ENCODE measurements at regions of chrX and their contacts with region 1.

Region 1: DNA sequence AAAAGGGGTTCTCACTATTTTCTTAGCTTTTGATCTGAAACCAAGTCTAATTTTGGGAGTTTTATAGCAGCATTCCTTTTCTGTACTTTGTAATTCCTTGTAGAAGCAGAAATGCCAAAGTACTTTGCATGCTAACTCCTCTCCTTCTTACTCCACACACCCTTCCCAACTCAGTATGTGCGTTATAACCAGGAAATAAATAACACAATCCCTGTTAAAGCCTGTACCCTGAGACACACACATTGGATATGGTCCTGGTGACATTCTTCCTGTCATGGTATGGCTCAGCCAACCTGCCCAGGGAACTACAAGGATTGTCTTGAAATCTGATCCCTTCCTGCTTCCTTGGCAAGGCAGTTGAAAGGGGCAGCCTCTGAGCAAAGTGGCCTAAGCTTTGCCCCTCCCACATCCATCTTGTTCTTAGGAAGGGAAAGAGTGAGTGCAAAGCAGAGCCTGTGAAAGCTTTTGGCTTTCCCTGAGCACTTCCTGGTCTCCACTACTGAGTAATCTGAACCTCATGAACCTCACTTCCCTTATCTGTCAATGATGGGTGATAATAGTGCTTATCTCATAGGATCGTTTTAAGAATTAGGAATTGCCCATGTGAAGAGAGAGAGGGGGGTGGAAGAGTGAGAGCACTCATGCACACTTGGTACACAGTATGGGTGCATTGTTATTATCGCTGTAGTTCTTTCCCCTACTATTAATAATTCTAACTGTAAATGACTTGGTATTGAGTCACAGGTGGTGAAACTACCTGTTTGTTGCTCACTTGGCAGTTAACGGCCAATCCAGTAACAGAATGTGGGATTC is 109.3 kb downstream of the AFF2 start:
- DNase-seq: no peak
- ATAC-seq: peak; percentile 78
- H3K4me3 Mint-ChIP-seq: peak overlapping the region; percentile 79
- H3K27ac Mint-ChIP-seq: peak overlapping the region; percentile 89
- H3K4me1 Mint-ChIP-seq: peaks cover 39% of the 10 kb centered on the region
- H3K27me3 Mint-ChIP-seq: no peaks in the 10 kb centered on the region
- CTCF ChIP-seq: no peak

Region 2: DNA sequence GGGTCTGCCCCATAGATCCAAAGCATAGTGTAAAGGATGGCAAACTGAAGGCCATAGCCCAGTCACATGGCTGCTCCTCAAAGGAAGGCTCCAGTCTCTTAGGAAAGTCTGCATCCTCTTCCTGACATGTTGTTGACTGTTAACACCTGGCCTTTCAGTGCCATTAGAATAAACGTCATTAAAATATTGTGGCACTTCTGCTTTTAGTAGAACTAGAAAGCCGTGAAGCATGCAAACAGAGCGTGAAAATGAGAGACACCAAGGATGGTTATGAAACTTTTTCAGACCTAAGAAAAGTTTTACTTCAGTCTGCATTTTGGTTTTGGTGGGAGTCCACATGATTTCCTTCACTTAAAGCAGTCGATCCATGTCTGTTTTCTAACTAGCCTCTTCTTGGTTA is 150.4 kb before region 1 on chrX:
- CTCF ChIA-PET with region 1: no interaction called
- POLR2A ChIA-PET with region 1: no interaction called
- intact Hi-C with region 1: loop called (anchors 2 kb)
- DNase-seq: peak; percentile 12
- ATAC-seq: peak; percentile 91
- H3K4me3 Mint-ChIP-seq: peak overlapping the region; percentile 53
- H3K27ac Mint-ChIP-seq: peak overlapping the region; percentile 81
- H3K4me1 Mint-ChIP-seq: peaks cover 38% of the 10 kb centered on the region
- H3K27me3 Mint-ChIP-seq: no peaks in the 10 kb centered on the region
- CTCF ChIP-seq: no peak

Region 3: GRCh38 chrX:148541544-148541983 is 68.2 kb before region 1 on chrX:
- CTCF ChIA-PET with region 1: no interaction called
- POLR2A ChIA-PET with region 1: no interaction called
- intact Hi-C with region 1: loop called (anchors 5 kb)
- DNase-seq: no peak
- ATAC-seq: no peak
- H3K4me3 Mint-ChIP-seq: no peak overlapping the region
- H3K27ac Mint-ChIP-seq: no peak overlapping the region
- H3K4me1 Mint-ChIP-seq: peaks cover 54% of the 10 kb centered on the region
- H3K27me3 Mint-ChIP-seq: no peaks in the 10 kb centered on the region
- CTCF ChIP-seq: no peak

Region 4: DNA sequence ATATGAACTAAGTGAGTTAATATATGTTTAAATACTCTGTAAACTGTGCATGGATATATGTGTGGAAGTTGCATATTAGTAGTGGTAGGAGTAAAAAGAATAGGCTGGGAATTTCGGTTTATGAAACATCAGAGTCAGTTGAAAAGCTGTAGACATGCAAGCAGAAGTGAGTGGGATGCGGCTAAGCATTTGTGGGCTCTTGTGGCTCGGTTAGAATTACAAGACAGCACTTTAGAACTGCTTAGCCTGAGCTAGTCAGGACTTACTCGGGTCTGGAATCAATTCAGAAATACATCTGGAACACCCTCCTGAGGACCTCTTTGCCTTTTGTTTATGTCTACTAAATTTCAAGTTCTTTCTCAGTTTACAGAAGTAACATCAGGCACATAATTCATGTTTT is 15.7 kb before region 1 on chrX:
- CTCF ChIA-PET with region 1: no interaction called
- POLR2A ChIA-PET with region 1: interaction called, 3 read pairs
- intact Hi-C with region 1: loop called (anchors 2 kb)
- DNase-seq: no peak
- ATAC-seq: no peak
- H3K4me3 Mint-ChIP-seq: no peak overlapping the region
- H3K27ac Mint-ChIP-seq: no peak overlapping the region
- H3K4me1 Mint-ChIP-seq: peaks cover 12% of the 10 kb centered on the region
- H3K27me3 Mint-ChIP-seq: no peaks in the 10 kb centered on the region
- CTCF ChIP-seq: no peak

Region 5: DNA sequence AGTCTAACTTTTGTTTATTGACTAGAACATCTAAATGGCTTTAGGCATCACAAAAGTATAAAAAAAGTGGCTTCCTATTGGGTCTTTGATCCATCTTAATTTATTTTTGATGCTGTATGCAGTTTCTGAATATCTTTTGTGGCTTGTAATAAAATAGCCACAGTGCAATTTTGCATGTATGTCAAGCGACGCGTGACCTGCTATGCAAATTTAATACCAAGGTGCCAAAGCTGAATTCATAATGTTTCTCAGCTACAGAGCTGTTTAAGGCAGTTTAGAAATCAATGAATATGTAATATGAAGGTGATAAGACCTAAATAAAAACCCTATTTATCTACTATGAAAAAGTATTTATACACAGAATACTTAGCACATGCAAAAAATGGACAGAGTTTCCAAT is 88.5 kb after region 1 on chrX:
- CTCF ChIA-PET with region 1: no interaction called
- POLR2A ChIA-PET with region 1: no interaction called
- intact Hi-C with region 1: loop called (anchors 5 kb)
- DNase-seq: no peak
- ATAC-seq: no peak
- H3K4me3 Mint-ChIP-seq: no peak overlapping the region
- H3K27ac Mint-ChIP-seq: no peak overlapping the region
- H3K4me1 Mint-ChIP-seq: peaks cover 17% of the 10 kb centered on the region
- H3K27me3 Mint-ChIP-seq: no peaks in the 10 kb centered on the region
- CTCF ChIP-seq: no peak

Measured in activated B cell treated with CpG ODN at 0.5 μM for 24 hours (primary cell).